Sigmoid colon (tissue), 7 donors: ENCODE measurements at regions of chr11 and their contacts with region 1.

Region 1: DNA sequence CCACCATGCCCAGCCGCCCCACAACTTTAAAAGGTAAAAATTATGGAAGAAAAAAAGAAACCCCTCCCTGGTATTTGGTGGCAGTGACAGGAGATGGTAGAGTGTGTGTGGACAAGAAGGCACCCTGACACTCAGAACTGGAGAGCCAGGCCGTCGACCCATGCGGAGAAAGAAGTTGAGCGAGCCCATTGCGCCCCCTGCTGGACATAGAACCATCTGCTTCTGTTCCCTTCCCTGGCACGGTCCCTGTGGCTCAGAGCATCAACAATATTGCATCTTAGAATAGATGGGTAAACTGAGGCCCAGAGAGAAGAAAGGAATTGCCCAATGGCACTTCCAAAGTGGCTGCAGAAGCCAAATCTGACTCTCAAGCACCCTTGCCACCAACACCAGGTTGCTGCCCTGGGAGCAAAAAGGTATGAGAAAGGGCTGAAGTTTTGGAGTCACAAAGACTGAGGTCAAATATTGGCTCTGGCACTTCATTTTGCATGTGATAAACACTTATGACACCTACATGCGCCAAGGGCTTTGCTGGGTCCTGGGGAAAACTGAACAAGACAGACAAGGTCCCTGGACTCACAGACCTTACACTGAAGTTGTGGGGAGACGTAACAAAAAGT is 8.6 kb downstream of the MRPL11 start:
- DNase-seq: peak; percentile 90
- H3K4me3 ChIP-seq: no peak overlapping the region
- H3K27ac ChIP-seq: no peak overlapping the region
- H3K4me1 ChIP-seq: no peaks in the 10 kb centered on the region
- H3K27me3 ChIP-seq: no peaks in the 10 kb centered on the region
- CTCF ChIP-seq: peak; percentile 76 to 81 (median 80)
- EP300 ChIP-seq: no peak
- POLR2A ChIP-seq: no peak

Region 2: GRCh38 chr11:65973439-65974110 is 456.5 kb before region 1 on chr11:
- intact Hi-C with region 1: no loop called
- DNase-seq: no peak
- H3K4me3 ChIP-seq: no peak overlapping the region
- H3K27ac ChIP-seq: no peak overlapping the region
- H3K4me1 ChIP-seq: no peaks in the 10 kb centered on the region
- H3K27me3 ChIP-seq: no peaks in the 10 kb centered on the region
- CTCF ChIP-seq: no peak
- EP300 ChIP-seq: no peak
- POLR2A ChIP-seq: no peak

Region 3: DNA sequence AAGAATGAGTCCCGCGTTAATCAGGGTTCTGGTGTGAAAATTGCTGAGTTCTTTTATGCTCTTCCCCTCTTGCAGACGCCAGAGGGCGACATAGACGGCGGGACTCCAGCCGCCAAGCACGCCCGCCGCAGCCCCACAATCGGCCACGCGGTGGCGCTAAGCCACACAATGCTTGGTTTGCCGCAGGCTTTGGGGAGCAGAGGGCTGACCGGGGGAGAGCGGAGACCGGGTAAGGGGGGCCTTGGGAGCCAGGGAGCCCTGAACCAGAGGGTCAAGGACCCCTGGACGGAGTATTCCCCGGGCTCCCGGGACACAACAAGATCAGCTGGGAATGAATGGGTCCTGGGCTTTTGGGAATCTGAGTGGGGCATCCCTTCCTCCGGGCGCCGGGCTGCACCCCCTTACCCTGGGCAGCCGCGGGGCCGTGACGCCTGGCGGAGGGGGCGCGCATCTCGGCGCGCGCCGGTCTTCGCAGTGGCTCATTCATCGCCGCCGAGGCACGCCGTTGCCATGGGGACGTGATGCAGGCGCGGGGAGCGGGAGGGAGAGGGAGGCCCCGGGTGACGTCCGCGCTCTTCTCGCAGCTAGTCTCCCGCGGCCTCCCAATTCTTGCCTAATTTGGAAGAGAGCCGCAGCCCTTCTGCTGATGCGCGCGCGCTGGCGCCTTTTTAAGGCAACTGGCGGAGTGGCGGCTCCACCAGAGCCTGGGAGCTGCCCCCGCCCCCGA is 21.4 kb before region 1 on chr11:
- intact Hi-C with region 1: loop called (anchors 1 kb)
- DNase-seq: peak; percentile 98
- H3K4me3 ChIP-seq: peak overlapping the region; percentile 29 to 52 (median 46)
- H3K27ac ChIP-seq: peak overlapping the region; percentile 82 to 96 (median 85)
- H3K4me1 ChIP-seq: peaks cover 0 to 52% (median 47%) of the 10 kb centered on the region in 4 donors
- H3K27me3 ChIP-seq: no peaks in the 10 kb centered on the region
- CTCF ChIP-seq: peak; percentile 99 to 100 (median 100)
- EP300 ChIP-seq: peak; percentile 45 to 89 (median 79)
- POLR2A ChIP-seq: peak in 1 of 2 donors; percentile 37

Region 4: GRCh38 chr11:66810576-66811185 is 380.6 kb after region 1 on chr11:
- intact Hi-C with region 1: no loop called
- DNase-seq: no peak
- H3K4me3 ChIP-seq: no peak overlapping the region
- H3K27ac ChIP-seq: no peak overlapping the region
- H3K4me1 ChIP-seq: no peaks in the 10 kb centered on the region
- H3K27me3 ChIP-seq: no peaks in the 10 kb centered on the region
- CTCF ChIP-seq: no peak
- EP300 ChIP-seq: no peak
- POLR2A ChIP-seq: no peak